ENCODE measurements at regions of chr1 and their contacts with region 1.

Region 1: GRCh38 chr1:113928941-113929749 is at the start of gene HIPK1:
- DNase-seq: peak in 1 of 2 donors; percentile 92
- H3K4me3 ChIP-seq: peak within 1 kb of the TSS; percentile 81 to 99
- H3K27ac ChIP-seq: peak within 1 kb of the TSS; percentile 92
- H3K4me1 ChIP-seq: peaks cover 50% of the 10 kb centered on the region
- H3K27me3 ChIP-seq: no peaks in the 10 kb centered on the region
- CTCF ChIP-seq: peak in 1 of 3 experiments; percentile 12
- POLR2A ChIP-seq: peak in 1 of 2 donors; percentile 69
- total RNA-seq, gene HIPK1: 52.3 TPM

Region 2: GRCh38 chr1:113904674-113905434 is 24.3 kb before region 1 on chr1 and contains the starts of genes AP4B1 and DCLRE1B:
- intact Hi-C with region 1: loop called (anchors 2 kb)
- DNase-seq: peak; percentile 99
- H3K4me3 ChIP-seq: peak within 1 kb of the TSS; percentile 67 to 86
- H3K27ac ChIP-seq: peak within 1 kb of the TSS; percentile 95
- H3K4me1 ChIP-seq: peaks cover 22% of the 10 kb centered on the region
- H3K27me3 ChIP-seq: no peaks in the 10 kb centered on the region
- CTCF ChIP-seq: peak; percentile 39 to 84 (median 82)
- POLR2A ChIP-seq: peak in 1 of 2 donors; percentile 50
- total RNA-seq, gene AP4B1: 6.9 TPM
- total RNA-seq, gene DCLRE1B: 5.2 TPM

Region 3: DNA sequence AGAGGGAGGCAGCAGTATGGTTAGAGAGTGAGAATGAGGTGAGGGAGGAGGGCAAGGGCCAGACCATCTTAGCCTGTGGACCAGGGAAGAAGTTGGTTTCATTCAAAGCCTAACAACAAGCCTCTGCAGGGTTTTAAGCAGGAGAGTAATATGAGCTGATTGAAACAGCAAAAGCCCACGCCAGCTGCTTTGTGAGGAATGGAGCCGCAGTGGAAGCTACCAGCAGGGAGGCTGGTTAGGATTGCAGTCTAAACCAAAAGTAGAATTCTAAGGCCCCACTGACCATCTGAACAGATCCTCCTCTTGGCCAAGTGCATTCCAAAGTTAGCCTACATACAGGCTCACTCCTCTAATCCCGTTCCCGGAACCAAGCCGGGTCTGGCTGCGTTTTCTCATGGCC is 94.9 kb after region 1 on chr1:
- intact Hi-C with region 1: no loop called
- DNase-seq: no peak
- H3K4me3 ChIP-seq: no peak overlapping the region
- H3K27ac ChIP-seq: no peak overlapping the region
- H3K4me1 ChIP-seq: no peaks in the 10 kb centered on the region
- H3K27me3 ChIP-seq: no peaks in the 10 kb centered on the region
- CTCF ChIP-seq: no peak
- POLR2A ChIP-seq: no peak

Region 4: DNA sequence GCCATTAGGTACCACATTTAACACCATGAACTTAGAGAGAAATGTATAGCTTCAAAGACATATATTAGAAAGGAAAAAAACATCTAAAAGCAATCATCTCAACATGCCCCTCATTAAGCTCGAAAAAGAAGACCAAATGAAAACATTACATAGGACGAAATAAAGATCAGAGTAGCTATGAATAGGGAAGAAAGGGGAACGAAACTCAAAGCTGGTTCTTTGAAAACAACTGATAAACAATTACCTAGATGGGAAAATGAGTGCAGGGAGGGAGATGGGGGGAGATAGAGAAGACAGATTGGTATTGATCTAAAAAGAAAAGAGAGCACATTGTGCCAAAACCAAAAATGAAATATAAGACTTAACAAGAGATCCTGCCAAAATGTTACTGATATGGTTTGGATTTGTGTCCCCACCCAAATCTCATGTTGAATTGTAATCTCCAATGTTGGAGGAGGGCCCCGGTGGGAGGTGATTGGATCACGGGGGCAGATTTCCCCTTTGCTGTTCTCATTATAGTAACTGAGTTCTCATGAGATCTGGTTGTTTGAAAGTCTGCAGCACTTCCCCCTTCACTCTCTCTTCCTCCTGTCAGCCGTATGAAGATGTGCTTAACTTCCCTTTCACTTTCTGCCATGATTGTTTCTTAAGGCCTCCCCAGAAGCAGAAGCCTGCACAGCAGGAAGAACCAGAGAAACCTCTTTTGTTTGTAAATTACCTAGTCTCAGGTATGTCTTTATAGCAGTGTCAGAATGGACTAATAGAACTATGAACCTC is 553.2 kb after region 1 on chr1:
- intact Hi-C with region 1: no loop called
- DNase-seq: no peak
- H3K4me3 ChIP-seq: no peak overlapping the region
- H3K27ac ChIP-seq: no peak overlapping the region
- H3K4me1 ChIP-seq: peaks cover 16% of the 10 kb centered on the region
- H3K27me3 ChIP-seq: no peaks in the 10 kb centered on the region
- CTCF ChIP-seq: no peak
- POLR2A ChIP-seq: no peak

Measured in vagina (tissue), 2 donors.